ENCODE measurements at regions of chr17 and their contacts with region 1.

Region 1: GRCh38 chr17:82551779-82552457 is 32.4 kb downstream of the FOXK2 start:
- H3K4me3 ChIP-seq: no peak overlapping the region
- H3K27ac ChIP-seq: no peak overlapping the region
- H3K4me1 ChIP-seq: peaks cover 11% of the 10 kb centered on the region
- CTCF ChIP-seq: peak; percentile 65; the same call in 1 of the 2 replicates

Region 2: DNA sequence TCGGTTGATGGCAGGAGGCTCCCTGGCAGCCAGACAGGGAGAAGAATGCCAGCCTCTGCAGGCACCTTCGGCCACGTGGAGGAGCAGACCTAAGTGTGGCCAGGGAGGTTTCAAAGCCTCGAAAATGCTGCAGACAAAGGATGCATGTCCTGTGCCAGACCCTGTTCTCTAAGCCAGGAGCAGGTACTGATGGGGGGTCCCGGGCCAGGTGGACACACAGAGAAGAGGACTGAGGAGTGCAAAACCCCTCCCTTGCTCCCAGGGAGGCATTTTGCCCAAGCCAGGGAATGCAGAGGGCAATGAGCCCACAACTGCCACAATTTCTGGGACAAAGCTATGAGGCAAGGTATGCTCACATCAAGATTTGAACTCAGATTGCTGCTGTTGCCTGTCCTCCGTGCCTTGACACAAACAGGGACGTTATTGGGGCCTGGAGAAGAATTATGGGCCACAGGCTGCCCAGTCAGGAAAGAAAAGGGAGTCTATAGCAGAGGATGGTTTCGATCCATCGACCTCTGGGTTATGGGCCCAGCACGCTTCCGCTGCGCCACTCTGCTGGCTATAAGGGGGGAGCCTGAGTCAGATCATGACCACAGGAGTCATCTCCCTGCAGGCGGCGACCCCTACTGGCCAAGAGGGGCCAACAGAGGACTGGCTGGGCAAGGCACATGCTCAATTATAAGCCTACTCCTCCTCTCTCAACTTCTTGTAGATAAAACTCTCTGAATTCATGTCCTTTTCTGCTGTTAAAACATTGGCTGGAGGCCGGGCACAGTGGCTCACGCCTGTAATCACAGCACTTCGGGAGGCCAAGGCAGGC is 57.5 kb before region 1 on chr17:
- CTCF ChIA-PET with region 1: interaction called, 12 read pairs
- POLR2A ChIA-PET with region 1: no interaction called
- H3K4me3 ChIP-seq: peak overlapping the region; percentile 25
- H3K27ac ChIP-seq: peak overlapping the region; percentile 0; the same call in 1 of the 2 replicates
- H3K4me1 ChIP-seq: peaks cover 2% of the 10 kb centered on the region; the same call in 1 of the 2 replicates
- CTCF ChIP-seq: peak; percentile 100

Region 3: DNA sequence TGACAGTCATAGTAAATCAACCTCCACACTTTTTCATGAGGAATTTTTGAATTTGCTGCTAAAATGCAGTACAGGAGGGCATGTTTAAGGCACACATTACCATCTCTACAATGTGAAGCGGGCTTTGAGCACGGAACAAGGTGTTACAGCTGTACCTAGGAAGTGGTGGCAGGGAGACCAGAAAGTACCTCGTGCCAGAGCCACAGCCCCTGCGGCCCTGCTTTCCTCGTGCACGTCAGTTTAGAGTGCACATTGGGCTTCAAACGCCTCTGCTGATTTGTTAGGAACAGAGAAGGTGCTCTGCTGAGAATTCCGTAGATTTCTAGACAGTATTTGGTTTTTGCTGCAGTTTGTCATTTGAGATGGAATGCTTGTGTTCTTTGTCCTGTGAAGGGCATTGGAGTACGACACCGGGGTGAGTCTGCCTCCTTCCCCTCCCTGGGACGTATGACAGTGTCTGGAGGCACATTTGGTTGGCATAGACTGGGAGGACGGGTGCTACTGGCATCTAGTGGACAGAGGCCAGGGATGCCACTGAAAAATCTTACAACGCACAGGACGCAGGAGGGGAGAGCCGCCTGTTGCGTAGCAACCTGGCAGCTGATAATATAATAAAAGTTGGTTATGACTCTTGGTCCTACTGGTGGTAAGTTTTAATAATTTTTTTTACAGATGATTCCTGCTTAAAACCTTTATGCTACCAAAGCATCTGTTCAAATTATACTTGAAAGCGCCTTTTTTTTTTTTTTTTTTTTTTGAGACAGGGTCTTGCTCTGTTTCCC is 23.2 kb before region 1 on chr17:
- CTCF ChIA-PET with region 1: interaction called, 11 read pairs
- POLR2A ChIA-PET with region 1: interaction called, 6 read pairs
- H3K4me3 ChIP-seq: no peak overlapping the region
- H3K27ac ChIP-seq: peak overlapping the region; percentile 17
- H3K4me1 ChIP-seq: peaks cover 40% of the 10 kb centered on the region
- CTCF ChIP-seq: peak; percentile 80

Region 4: DNA sequence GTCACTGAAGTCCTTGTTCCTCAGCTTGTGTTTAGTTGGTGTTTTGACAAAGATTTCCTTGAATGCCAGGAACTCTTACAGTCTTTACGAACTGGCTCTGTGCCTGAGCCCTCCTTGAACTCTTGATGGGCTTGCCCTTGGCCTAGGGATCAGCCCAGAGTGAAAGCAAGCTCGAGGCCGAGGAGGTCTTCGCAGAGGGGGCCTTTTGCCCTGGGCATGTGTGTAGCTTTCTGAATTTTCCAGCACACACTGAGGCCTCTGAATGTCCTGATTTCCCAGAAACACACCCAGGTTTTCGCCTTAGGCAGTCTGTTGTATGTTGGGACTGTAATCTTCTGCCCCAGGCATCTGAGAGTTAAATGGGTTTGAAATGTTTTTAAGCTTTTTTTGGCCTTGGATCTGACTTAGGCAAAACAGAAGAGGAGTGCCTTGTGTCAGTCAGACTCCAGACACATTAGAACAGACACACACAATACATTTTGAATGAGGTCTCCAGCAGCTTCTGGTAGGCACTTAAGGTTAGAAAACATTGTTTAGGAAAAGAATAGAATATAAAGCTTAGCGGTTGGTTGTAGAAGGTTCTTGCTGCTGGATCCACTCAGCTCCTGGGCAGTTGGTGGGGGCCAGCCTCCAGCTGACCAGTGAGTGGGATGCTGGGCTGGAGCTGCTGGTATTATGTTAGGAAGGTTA is 15.3 kb before region 1 on chr17:
- CTCF ChIA-PET with region 1: interaction called, 15 read pairs
- POLR2A ChIA-PET with region 1: interaction called, 5 read pairs
- H3K4me3 ChIP-seq: no peak overlapping the region
- H3K27ac ChIP-seq: peak overlapping the region; percentile 79
- H3K4me1 ChIP-seq: peaks cover 36% of the 10 kb centered on the region
- CTCF ChIP-seq: no peak

Region 5: DNA sequence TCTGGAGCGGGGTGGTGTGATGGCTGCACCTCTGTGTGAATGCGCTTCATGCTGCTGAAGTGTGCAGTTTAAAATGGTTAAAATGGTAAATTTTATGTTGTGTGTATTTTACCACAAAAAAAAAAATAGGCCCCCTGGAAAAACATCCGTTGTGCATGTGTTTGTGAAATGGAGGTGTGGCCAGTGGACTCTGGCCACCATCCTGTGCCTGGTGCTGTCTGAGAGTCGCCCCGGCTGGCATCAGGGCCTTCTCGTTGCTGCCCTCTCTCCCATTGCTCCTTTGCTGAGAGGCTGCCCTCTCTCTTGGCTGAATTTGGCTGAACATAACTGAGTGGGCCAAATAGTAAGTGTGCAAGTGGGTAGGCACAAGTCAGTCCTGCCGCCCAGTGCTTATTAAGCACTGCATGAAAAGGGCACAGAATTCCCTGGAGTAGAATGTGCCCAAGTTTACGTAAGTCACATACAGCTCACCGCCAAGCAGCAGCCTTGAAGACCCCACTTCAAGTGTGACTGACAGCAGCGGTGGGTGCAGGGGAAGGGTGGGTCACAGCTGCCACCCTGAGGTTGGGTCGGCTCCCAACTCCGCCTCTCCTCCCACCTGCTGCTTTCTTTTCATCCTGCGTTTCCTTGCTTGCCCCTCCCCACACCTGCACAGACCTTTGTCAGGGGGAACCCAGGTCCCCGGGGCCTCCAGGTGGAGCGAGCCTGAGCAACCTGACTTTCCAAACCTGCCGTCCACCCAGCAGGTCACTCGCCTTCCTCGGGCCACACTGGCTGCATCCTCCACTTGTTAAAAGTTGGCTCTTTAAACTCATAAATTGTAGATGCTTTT is 14.4 kb after region 1 on chr17:
- CTCF ChIA-PET with region 1: interaction called, 11 read pairs
- POLR2A ChIA-PET with region 1: no interaction called
- H3K4me3 ChIP-seq: no peak overlapping the region
- H3K27ac ChIP-seq: no peak overlapping the region
- H3K4me1 ChIP-seq: no peaks in the 10 kb centered on the region; the same call in 1 of the 2 replicates
- CTCF ChIP-seq: no peak

Measured in HEK293 (cell line).